Naive thymus-derived CD8-positive, alpha-beta T cell (primary cell): ENCODE measurements at regions of chr2 and their contacts with region 1.

Region 1: GRCh38 chr2:69914170-69914960 is 544 bp upstream of the MXD1 start:
- DNase-seq: peak; percentile 21 to 100 (median 100)
- ATAC-seq: peak; percentile 91 to 92
- H3K4me3 Mint-ChIP-seq: peak overlapping the region; percentile 74 to 90 (median 86)
- H3K27ac Mint-ChIP-seq: peak overlapping the region; percentile 78 to 95 (median 92)
- H3K4me1 Mint-ChIP-seq: peaks cover 3 to 46% (median 27%) of the 10 kb centered on the region in 4 donors
- H3K27me3 Mint-ChIP-seq: no peaks in the 10 kb centered on the region

Region 2: DNA sequence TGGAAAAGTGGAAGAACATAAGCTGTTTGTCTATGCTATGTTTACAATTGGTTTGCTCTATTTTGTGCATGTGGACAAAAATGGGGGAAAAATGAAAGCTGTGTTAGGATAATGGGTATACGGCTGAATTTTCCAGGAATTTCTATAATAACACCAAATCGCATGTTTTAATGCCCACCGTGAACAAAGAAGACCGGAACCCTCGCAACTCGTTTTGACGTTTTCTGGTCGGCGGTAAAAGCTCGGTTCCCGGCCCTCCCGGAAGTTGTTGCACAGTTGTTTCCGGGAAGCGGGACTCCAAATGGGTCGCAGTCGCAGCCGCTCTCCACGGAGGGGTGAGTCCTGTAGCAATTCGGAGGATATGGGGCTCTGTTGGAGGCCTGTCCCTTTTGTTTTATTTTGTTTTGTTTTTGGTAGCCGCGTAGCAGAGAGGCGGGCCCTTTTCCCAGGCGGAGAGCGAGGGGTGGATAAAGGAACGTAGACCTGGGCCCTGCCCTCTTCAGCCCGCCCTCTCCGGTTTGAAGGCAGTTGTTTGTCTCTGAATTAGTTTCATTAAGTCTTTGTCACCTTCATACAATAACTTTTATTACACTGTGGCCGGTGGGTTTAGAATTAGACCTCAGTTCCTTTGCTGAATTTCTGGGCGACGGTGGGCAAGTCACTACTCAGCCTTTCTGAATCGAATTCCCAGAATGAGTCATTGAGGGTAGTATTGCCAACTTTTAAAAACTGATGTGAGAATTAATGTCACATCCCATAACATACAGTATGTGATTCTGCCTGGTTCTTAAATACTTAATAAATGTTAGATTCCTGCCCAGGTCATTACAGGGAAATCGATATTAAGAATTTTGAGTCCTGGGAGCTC is 20.4 kb before region 1 on chr2 and contains the start of gene SNRNP27:
- POLR2A ChIA-PET with region 1: interaction called, 11 read pairs
- DNase-seq: peak; percentile 63 to 89 (median 81)
- ATAC-seq: peak; percentile 91 to 97
- H3K4me3 Mint-ChIP-seq: peak within 1 kb of the TSS; percentile 96 to 100 (median 99)
- H3K27ac Mint-ChIP-seq: peak within 1 kb of the TSS; percentile 96 to 100 (median 99)
- H3K4me1 Mint-ChIP-seq: peaks cover 16 to 48% (median 38%) of the 10 kb centered on the region in 4 donors
- H3K27me3 Mint-ChIP-seq: no peaks in the 10 kb centered on the region
- polyA plus RNA-seq, gene SNRNP27: 38.6 to 60.9 (median 50.9) TPM

Region 3: DNA sequence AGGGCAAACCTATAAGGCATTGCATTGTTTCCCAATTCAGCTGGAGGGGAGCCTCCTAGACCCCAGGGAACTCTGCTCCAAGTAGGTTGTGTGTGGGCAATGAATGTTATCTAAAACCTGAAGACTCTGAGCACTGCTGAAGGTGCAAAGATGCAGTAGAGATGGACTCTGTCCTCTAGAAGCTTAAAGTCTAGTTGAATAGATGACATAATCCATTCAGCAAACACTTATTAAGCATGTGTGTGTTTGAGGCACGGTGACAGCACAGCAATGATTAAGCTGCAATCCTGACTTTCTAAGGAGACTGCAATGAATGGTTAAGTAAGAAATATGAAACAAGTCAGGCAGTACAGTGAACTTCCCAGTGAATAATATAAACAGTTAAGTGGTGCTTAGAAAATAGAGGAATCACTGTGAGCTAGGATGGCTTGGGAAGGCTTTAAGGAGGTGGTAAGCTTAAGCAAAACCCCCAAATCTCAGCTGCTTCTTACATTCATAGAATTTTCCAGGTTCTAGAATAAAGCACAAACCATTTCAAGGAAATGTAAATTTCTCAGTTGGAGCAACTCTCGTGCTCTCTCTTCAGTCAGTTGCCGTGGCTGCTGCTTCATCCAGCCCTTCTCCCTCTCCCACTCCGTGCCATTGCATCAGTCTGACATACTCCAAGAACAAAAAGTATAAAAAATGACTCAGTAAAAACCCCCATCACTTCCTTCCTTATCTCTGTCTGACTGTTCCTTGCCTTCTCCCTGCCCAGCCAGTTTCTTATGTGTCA is 19.7 kb after region 1 on chr2:
- POLR2A ChIA-PET with region 1: no interaction called
- DNase-seq: no peak
- ATAC-seq: no peak
- H3K4me3 Mint-ChIP-seq: no peak overlapping the region
- H3K27ac Mint-ChIP-seq: peak overlapping the region in 7 of 10 donors; percentile 7 to 74 (median 47)
- H3K4me1 Mint-ChIP-seq: peaks cover 18 to 35% (median 29%) of the 10 kb centered on the region in 4 donors
- H3K27me3 Mint-ChIP-seq: no peaks in the 10 kb centered on the region

Region 4: DNA sequence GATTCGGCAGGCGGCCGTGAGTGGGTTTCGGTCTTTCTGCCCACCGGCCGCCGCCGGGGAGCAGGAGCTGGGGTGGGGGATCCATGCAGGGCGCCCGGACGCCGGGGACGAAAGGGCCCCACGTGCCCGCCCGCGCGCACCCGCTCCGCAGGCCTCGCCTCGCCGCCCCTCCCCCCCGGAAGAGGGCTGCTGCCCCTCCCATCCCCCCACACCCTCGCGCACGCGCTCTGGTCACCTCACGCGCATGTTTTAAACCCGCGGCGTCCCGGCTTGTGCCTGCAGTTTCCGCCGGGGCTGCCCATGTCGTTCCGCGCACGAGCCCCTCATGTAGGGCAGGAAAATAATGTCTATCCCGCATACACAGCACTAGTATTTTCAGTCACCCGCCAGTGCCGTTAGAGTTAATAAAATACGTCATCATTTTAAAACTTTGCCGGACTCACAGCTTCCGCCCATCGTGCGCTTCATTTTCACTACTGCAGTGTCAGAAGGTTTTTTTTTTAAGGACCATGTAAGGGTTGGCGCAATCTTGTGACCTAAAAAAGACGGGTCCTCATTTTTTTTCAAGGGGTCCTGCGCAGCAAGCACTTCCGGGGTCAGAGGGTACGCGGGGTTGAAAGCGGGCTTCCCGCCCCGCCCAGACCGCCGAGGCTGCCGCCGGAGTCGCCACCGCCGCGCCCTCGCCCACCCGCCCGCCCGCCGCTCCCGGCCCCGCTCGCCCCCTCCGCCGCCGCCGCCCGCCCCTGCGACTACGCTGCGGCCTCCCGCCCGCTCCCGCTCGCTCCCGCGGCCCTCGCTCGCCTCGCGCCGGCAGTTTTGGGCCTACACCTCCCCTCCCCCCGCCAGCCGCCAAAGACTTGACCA is 172.7 kb after region 1 on chr2 and contains the start of gene PCBP1:
- POLR2A ChIA-PET with region 1: interaction called, 109 read pairs
- DNase-seq: peak; percentile 89 to 99 (median 98)
- ATAC-seq: peak; percentile 36 to 61
- H3K4me3 Mint-ChIP-seq: peak within 1 kb of the TSS; percentile 93 to 99 (median 97)
- H3K27ac Mint-ChIP-seq: peak within 1 kb of the TSS; percentile 100
- H3K4me1 Mint-ChIP-seq: peaks cover 35 to 71% (median 65%) of the 10 kb centered on the region in 4 donors
- H3K27me3 Mint-ChIP-seq: peaks cover 0 to 4% (median 0%) of the 10 kb centered on the region in 5 donors
- polyA plus RNA-seq, gene PCBP1: 159 to 218 (median 195) TPM

Region 5: GRCh38 chr2:70124983-70125480 is 210.7 kb after region 1 on chr2:
- POLR2A ChIA-PET with region 1: interaction called, 38 read pairs
- DNase-seq: peak in 9 of 10 donors; percentile 49 to 84 (median 65)
- ATAC-seq: peak; percentile 63 to 71
- H3K4me3 Mint-ChIP-seq: peak overlapping the region; percentile 90 to 99 (median 97)
- H3K27ac Mint-ChIP-seq: peak overlapping the region; percentile 99 to 100 (median 100)
- H3K4me1 Mint-ChIP-seq: peaks cover 33 to 86% (median 81%) of the 10 kb centered on the region in 4 donors
- H3K27me3 Mint-ChIP-seq: no peaks in the 10 kb centered on the region

Region 6: DNA sequence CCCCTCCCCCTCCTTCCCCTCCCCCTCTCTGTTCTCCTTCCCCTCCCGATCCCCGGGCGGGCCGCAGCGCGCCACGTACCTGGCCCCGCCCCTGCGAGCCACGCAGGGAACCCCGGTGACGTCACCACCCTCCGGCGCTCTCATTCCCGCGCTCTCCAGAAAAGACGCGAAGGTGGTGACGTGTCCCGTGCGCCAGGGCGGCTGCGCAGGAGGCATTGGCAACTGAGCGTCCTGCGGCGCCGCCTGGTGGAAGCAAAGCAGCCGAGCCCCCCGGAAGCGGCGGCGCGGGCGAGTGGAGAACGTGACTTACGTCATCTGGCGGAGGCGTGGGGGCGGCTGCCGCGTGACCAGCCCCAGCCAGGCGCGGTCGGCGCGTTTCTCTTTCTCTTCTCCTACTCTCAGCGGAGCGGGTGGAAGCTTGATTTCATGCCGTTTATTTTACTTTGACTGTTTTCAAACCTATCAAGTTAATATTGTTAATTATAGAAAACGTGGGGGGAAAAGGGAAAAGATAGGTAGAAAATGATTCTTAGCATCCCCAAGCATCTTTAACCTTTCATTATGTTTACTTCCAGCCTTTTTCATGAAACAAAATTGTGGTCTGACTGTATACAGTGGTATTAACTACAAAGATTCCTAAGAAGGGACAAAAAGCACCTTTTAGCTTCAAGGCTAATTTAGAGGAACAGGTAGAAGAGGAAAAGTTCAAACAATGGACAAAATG is 228.4 kb after region 1 on chr2:
- POLR2A ChIA-PET with region 1: interaction called, 124 read pairs
- DNase-seq: peak; percentile 95 to 100 (median 100)
- ATAC-seq: peak; percentile 78 to 81
- H3K4me3 Mint-ChIP-seq: peak overlapping the region; percentile 78 to 96 (median 91)
- H3K27ac Mint-ChIP-seq: peak overlapping the region; percentile 96 to 100 (median 98)
- H3K4me1 Mint-ChIP-seq: peaks cover 34 to 64% (median 59%) of the 10 kb centered on the region in 4 donors
- H3K27me3 Mint-ChIP-seq: peaks cover 0 to 3% (median 0%) of the 10 kb centered on the region in 5 donors

Region 7: DNA sequence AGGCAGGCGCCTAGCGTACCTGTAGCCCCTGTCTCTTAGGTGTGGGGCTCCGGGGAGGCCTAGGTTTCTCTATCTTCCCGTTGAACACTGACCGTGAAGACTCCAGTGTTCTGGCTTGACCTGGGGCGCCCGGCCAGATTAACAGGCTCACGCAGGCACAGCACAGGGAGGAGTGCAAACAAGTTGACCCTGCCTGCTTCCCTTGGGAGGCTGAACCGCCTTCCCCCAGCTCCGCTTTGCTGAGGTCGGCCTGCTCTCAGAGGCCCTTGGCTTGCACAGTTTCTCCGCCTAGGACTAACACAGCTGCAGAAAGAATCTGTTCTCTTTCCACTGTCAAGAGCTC is 344.1 kb after region 1 on chr2:
- POLR2A ChIA-PET with region 1: interaction called, 11 read pairs
- DNase-seq: no peak
- ATAC-seq: no peak
- H3K4me3 Mint-ChIP-seq: peak overlapping the region; percentile 81 to 97 (median 90)
- H3K27ac Mint-ChIP-seq: peak overlapping the region; percentile 42 to 95 (median 84)
- H3K4me1 Mint-ChIP-seq: peaks cover 15 to 51% (median 38%) of the 10 kb centered on the region in 4 donors
- H3K27me3 Mint-ChIP-seq: no peaks in the 10 kb centered on the region